Activated B cell treated with CpG ODN at 0.5 μM for 24 hours (primary cell): ENCODE measurements at regions of chr2 and their contacts with region 1.

Region 1: GRCh38 chr2:33372940-33373553 is 103.4 kb upstream of the RASGRP3 start:
- DNase-seq: no peak
- ATAC-seq: peak; percentile 52
- H3K4me3 Mint-ChIP-seq: no peak overlapping the region
- H3K27ac Mint-ChIP-seq: no peak overlapping the region
- H3K4me1 Mint-ChIP-seq: no peaks in the 10 kb centered on the region
- H3K27me3 Mint-ChIP-seq: no peaks in the 10 kb centered on the region
- CTCF ChIP-seq: peak; percentile 84

Region 2: GRCh38 chr2:32553829-32554432 is 819.1 kb before region 1 on chr2:
- CTCF ChIA-PET with region 1: no interaction called
- POLR2A ChIA-PET with region 1: no interaction called
- intact Hi-C with region 1: loop called (anchors 2 kb)
- DNase-seq: no peak
- ATAC-seq: peak; percentile 85
- H3K4me3 Mint-ChIP-seq: no peak overlapping the region
- H3K27ac Mint-ChIP-seq: peak overlapping the region; percentile 30
- H3K4me1 Mint-ChIP-seq: peaks cover 6% of the 10 kb centered on the region
- H3K27me3 Mint-ChIP-seq: no peaks in the 10 kb centered on the region
- CTCF ChIP-seq: no peak

Region 3: DNA sequence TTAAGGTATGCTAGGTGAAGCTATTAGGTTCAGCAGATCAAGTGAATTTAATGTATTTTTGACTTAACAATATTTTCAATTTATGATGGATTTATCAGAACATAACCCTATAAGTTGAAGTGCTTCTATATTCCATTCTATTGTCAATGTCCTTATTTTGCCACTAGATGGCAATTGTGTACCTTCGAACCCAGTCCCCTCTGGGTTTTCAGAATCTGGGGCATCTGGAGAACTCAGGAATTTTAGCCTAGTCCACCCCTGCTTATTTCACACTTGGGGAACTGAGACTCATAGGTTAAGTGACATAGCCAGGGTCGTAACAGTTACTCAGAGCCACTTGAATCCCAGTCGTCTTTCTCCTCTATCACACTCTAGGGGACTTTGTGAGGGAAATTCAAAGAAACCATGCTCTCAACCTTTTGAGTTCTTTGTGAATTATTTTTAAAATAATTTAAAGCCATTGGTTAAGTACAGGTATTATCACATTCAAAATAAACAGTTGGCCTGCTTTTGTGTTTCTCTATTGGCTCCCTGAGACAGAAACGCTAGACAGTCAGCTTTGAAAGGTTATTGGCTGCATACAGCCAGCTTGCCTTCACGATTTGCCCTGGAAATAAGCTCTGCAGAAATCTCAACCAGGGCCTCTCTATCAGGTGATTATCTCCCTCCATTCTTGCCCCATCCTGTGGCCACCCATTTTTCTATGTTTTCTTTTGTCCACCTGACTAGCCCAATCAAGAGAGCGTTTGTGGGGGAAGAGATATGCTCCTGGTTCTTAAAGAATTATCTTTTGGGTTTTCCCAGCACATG is 600.2 kb before region 1 on chr2:
- CTCF ChIA-PET with region 1: interaction called, 3 read pairs
- POLR2A ChIA-PET with region 1: no interaction called
- intact Hi-C with region 1: loop called (anchors 1 kb)
- DNase-seq: no peak
- ATAC-seq: no peak
- H3K4me3 Mint-ChIP-seq: no peak overlapping the region
- H3K27ac Mint-ChIP-seq: no peak overlapping the region
- H3K4me1 Mint-ChIP-seq: no peaks in the 10 kb centered on the region
- H3K27me3 Mint-ChIP-seq: no peaks in the 10 kb centered on the region
- CTCF ChIP-seq: no peak

Region 4: DNA sequence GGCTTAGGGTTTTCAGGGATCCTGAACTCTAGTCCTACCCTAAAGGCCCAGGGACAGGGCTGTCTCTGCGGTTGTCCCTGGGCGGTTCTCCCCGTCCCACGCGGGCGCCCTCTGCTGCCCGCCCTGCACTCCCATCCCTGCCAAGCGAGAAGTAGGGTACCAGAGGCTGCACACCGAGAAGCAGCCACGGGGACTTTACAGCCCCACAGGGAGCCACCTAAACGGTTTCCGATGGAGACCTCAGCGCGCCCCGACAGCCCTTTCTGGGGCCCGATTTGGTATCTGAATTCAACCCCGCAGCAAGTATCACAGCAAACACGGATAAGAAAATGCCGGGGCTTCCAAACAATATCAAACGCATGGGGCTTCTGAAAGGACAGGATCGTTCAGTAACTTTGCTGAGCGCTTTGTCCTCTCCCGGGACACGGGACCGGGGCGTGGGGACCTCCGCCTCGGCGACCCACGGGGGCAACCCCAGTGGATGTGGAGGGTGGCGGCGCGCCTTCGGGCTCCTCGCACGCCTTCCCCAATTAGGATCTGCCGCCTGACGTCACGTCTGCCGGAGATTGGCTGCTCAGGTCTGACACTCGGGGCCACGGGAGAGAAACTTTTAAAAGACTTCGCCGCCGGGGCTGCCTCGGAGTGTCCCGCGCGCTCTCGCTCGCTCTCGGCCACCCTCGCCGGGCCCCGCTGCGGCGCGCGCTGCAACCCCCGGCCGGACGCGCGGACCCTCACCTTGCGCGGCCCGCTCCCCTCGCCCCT is 426.6 kb before region 1 on chr2 and contains the start of gene LTBP1:
- CTCF ChIA-PET with region 1: no interaction called
- POLR2A ChIA-PET with region 1: no interaction called
- intact Hi-C with region 1: loop called (anchors 5 kb)
- DNase-seq: peak; percentile 41
- ATAC-seq: peak; percentile 78
- H3K4me3 Mint-ChIP-seq: peak within 1 kb of the TSS; percentile 83
- H3K27ac Mint-ChIP-seq: no peak within 1 kb of the TSS
- H3K4me1 Mint-ChIP-seq: peaks cover 15% of the 10 kb centered on the region
- H3K27me3 Mint-ChIP-seq: peaks cover 29% of the 10 kb centered on the region
- CTCF ChIP-seq: no peak
- total RNA-seq, gene LTBP1: 0.07 TPM in 1 of 2 replicates, not detected in the other

Region 5: DNA sequence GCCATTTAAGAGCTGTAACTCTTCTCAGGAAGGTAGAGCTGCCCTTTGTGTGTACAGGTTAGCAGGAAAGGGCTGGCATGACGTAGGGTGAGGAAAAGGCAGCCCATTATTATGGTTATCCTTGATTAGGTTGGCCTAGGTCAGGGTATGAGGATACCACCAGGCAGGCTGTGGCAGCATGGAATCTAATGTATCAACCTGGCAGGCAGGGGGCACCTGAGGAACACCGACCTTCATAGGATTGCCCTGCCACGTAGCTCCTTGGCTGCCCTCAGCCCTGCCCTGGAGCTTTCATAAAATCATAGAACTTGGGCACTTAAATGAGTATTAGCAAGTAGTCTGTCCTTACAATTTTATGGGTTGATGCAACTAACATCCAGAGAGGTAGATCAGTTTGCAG is 164.6 kb before region 1 on chr2:
- CTCF ChIA-PET with region 1: interaction called, 5 read pairs
- POLR2A ChIA-PET with region 1: no interaction called
- intact Hi-C with region 1: loop called (anchors 1 kb)
- DNase-seq: no peak
- ATAC-seq: no peak
- H3K4me3 Mint-ChIP-seq: no peak overlapping the region
- H3K27ac Mint-ChIP-seq: no peak overlapping the region
- H3K4me1 Mint-ChIP-seq: peaks cover 2% of the 10 kb centered on the region
- H3K27me3 Mint-ChIP-seq: peaks cover 6% of the 10 kb centered on the region
- CTCF ChIP-seq: no peak

Region 6: GRCh38 chr2:33777786-33778185 is 404.7 kb after region 1 on chr2:
- CTCF ChIA-PET with region 1: no interaction called
- POLR2A ChIA-PET with region 1: no interaction called
- intact Hi-C with region 1: no loop called
- DNase-seq: no peak
- ATAC-seq: no peak
- H3K4me3 Mint-ChIP-seq: no peak overlapping the region
- H3K27ac Mint-ChIP-seq: no peak overlapping the region
- H3K4me1 Mint-ChIP-seq: no peaks in the 10 kb centered on the region
- H3K27me3 Mint-ChIP-seq: no peaks in the 10 kb centered on the region
- CTCF ChIP-seq: no peak